ENCODE measurements at regions of chr1 and their contacts with region 1.

Region 1: GRCh38 chr1:236489710-236490377 is 33.9 kb upstream of the LGALS8 start:
- DNase-seq: no peak
- H3K4me3 ChIP-seq: no peak overlapping the region
- H3K27me3 ChIP-seq: no peaks in the 10 kb centered on the region
- CTCF ChIP-seq: peak; percentile 52

Region 2: DNA sequence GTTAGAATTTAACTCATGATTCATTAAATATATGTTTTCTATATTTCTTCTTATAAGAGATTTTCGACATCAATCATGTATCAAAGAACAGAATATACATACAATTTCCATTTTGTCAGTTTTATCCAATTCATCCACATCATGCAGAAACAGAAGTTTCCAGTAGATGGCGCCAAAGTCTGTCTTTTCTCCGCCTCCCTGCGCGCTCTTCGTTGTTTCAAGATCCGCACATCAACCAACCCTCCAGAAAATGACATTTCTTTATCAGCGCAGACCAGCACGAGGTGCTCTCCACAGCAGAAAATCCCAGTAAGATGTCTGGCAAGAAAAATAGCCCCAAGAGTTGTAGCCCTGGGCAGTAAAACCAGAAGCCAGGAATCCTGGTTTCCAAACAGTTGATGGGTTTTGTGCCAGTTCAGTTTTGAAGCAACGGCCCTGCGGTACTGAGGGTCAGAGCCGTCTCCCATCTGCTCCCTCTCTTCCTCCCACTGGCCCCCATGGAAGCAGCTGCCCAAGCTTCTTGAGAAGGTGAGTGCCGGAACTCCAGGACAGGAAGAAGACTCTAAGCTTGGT is 386.1 kb before region 1 on chr1:
- CTCF ChIA-PET with region 1: interaction called, 40 read pairs
- POLR2A ChIA-PET with region 1: no interaction called
- DNase-seq: no peak
- H3K4me3 ChIP-seq: no peak overlapping the region
- H3K27me3 ChIP-seq: no peaks in the 10 kb centered on the region
- CTCF ChIP-seq: peak; percentile 73

Region 3: DNA sequence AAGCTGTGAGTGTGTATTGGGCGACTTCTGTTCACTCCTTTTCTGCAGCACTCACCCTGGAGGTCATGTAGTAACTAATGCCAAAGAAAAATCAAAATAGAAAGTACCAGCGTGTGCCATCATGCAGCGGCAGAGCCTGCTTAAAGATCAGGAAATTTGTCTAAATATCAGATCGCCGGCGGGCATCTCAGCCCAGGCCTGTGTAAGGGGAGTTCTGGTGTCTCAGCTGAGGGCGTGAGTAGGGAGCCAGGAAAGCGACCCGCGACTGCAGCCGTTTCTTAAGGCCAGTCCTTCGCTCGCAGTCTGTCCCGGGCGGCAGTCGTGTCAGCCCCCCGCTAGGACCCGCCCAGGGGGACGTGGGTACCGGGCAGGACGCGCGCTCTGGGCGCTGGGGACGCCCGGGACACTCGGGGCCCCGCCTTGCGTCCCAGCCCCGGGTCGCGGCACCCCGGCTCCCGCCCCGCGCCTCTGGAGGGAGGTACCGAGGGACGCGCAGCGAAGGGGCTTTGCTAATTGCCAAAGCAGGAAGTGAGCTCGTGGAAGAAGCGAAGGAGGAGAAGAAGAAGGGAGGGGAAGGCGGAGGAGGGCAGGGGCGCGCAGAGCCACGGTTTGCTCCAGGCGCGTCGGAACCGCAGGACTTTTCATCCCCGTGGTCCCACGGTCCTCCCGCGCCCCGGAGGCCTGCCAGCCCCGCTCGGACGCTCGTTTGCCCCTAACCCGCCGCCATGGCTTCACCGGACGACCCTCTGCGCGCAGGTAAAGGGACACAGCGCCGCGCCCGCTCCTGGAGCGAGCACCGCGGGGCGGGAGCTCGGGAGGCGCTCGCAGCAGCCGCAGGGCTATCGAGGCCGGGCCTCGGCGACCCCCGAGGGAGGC is 94.7 kb before region 1 on chr1:
- CTCF ChIA-PET with region 1: no interaction called
- POLR2A ChIA-PET with region 1: no interaction called
- DNase-seq: no peak
- H3K4me3 ChIP-seq: peak overlapping the region; percentile 51
- H3K27me3 ChIP-seq: peaks cover 2% of the 10 kb centered on the region; the same call in 1 of the 2 replicates
- CTCF ChIP-seq: no peak

Region 4: DNA sequence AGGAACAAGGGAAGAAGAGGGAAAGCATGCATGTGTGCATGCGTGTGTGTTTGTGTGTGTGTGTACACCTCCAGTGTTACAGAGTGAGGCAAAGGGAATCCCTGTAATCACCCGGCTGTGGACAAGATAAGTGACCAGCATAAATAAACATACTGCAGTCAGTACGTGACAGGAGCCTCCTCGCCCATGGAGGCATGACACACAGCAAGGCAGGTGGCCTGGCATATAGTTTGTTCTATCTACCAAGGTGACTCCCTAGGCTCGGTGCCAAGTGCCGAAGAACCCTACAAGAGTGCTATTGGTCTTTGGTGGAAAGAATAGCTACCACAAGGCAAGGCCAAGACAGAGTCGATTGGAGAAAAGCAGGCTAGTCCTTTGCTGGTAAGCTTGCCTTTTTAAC is 146.2 kb after region 1 on chr1:
- CTCF ChIA-PET with region 1: no interaction called
- POLR2A ChIA-PET with region 1: no interaction called
- DNase-seq: no peak
- H3K4me3 ChIP-seq: no peak overlapping the region
- H3K27me3 ChIP-seq: no peaks in the 10 kb centered on the region
- CTCF ChIP-seq: no peak

Region 5: GRCh38 chr1:236862615-236863211 is 372.9 kb after region 1 on chr1:
- CTCF ChIA-PET with region 1: no interaction called
- POLR2A ChIA-PET with region 1: no interaction called
- DNase-seq: no peak
- H3K4me3 ChIP-seq: no peak overlapping the region
- H3K27me3 ChIP-seq: no peaks in the 10 kb centered on the region
- CTCF ChIP-seq: no peak